ENCODE measurements at regions of chr7 and their contacts with region 1.

Region 1: DNA sequence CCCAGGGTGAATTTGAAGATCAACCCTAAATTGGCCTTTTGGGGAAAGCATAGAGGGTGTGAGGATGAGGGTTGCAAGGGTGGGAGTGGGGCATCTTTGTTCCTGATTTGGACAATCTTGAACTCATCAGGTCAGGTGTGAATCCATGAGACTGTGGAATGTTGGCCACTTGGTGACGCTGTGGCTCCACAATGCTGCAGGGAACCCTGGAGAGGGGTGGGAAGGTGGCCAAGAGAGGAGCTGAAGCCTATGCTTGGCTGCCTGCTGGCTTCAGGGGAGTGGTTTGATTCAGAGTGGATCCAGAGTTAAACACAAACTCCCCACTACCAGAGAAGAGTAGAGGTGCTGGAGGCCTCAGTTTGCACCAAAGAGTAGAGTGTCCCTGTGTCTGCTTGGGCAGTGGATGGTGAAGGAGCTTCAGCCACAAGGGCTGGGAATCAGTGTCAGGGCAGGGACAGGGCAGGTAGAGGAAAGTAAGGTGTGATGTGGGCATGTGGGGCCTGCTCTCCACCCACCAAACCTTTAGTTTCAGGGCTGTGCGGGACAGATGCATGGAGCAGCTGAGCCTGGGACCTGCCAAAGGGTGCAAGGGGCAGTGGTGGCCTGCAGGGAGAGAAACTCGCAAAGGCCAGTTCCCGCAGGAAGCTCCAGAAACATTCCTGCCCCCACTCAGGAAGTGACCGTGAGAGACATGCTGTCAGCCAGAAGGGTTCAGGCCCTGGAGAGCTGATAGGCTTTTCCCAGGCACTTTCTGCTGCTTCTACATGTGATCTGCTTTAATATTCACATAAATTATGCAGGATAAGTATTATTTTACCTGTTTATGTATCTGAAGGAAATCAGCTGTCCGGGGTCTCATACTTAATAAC is 81.0 kb upstream of the PRSS58 start:
- DNase-seq: no peak
- ATAC-seq: no peak
- H3K4me3 ChIP-seq: no peak overlapping the region
- H3K4me3 Mint-ChIP-seq: peak overlapping the region in 5 of 10 donors; percentile 13 to 52 (median 17)
- H3K27ac ChIP-seq: no peak overlapping the region
- H3K27ac Mint-ChIP-seq: peak overlapping the region in 4 of 9 donors; percentile 35 to 78 (median 57)
- H3K4me1 ChIP-seq: no peaks in the 10 kb centered on the region
- H3K4me1 Mint-ChIP-seq: peaks cover 1 to 24% (median 8%) of the 10 kb centered on the region in 7 donors
- H3K27me3 ChIP-seq: no peaks in the 10 kb centered on the region
- H3K27me3 Mint-ChIP-seq: peaks cover 0 to 21% (median 10%) of the 10 kb centered on the region in 5 donors

Region 2: GRCh38 chr7:141511676-141512396 is 827.0 kb before region 1 on chr7:
- CTCF ChIA-PET with region 1: no interaction called
- POLR2A ChIA-PET with region 1: no interaction called
- intact Hi-C with region 1: no loop called
- DNase-seq: no peak
- ATAC-seq: no peak
- H3K4me3 ChIP-seq: peak overlapping the region; percentile 16
- H3K4me3 Mint-ChIP-seq: peak overlapping the region; percentile 61 to 79 (median 72)
- H3K27ac ChIP-seq: no peak overlapping the region
- H3K27ac Mint-ChIP-seq: no peak overlapping the region
- H3K4me1 ChIP-seq: no peaks in the 10 kb centered on the region
- H3K4me1 Mint-ChIP-seq: peaks cover 8 to 16% (median 13%) of the 10 kb centered on the region in 7 donors
- H3K27me3 ChIP-seq: no peaks in the 10 kb centered on the region
- H3K27me3 Mint-ChIP-seq: peaks cover 63 to 76% (median 72%) of the 10 kb centered on the region in 5 donors

Region 3: DNA sequence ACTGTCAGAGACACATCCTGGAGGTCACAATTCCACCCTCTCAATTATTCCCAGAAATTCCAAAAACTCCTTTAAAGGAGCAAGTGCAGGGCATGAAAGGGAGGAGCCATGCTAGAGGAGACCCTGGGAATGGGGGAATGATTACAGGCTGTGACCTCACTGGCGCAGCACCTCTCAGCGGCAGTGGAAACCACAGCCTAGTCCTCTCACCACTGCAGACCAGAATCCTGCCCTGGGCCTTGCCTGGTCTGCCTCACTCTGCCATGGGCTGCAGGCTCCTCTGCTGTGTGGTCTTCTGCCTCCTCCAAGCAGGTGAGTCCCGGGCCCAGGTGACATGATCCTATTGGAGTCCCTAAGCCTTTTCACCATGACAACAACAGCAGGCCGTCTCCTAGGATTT is 30.5 kb before region 1 on chr7:
- CTCF ChIA-PET with region 1: interaction called, 6 read pairs
- POLR2A ChIA-PET with region 1: no interaction called
- intact Hi-C with region 1: loop called in 1 of 2 experiments (anchors 1 kb)
- DNase-seq: no peak
- ATAC-seq: peak; percentile 34
- H3K4me3 ChIP-seq: no peak overlapping the region
- H3K4me3 Mint-ChIP-seq: peak overlapping the region in 6 of 10 donors; percentile 15 to 76 (median 48)
- H3K27ac ChIP-seq: no peak overlapping the region
- H3K27ac Mint-ChIP-seq: no peak overlapping the region
- H3K4me1 ChIP-seq: peaks cover 9 to 12% of the 10 kb centered on the region in 2 donors
- H3K4me1 Mint-ChIP-seq: peaks cover 5 to 30% (median 25%) of the 10 kb centered on the region in 7 donors
- H3K27me3 ChIP-seq: no peaks in the 10 kb centered on the region
- H3K27me3 Mint-ChIP-seq: peaks cover 0 to 30% (median 13%) of the 10 kb centered on the region in 5 donors

Region 4: GRCh38 chr7:142459551-142459963 is 120.7 kb after region 1 on chr7:
- CTCF ChIA-PET with region 1: no interaction called
- POLR2A ChIA-PET with region 1: no interaction called
- intact Hi-C with region 1: no loop called
- DNase-seq: peak in 5 of 9 donors; percentile 19 to 42 (median 34)
- ATAC-seq: peak; percentile 72
- H3K4me3 ChIP-seq: no peak overlapping the region
- H3K4me3 Mint-ChIP-seq: peak overlapping the region; percentile 12 to 83 (median 47)
- H3K27ac ChIP-seq: peak overlapping the region; percentile 46
- H3K27ac Mint-ChIP-seq: peak overlapping the region; percentile 24 to 92 (median 67)
- H3K4me1 ChIP-seq: peaks cover 4 to 42% of the 10 kb centered on the region in 2 donors
- H3K4me1 Mint-ChIP-seq: peaks cover 38 to 86% (median 81%) of the 10 kb centered on the region in 7 donors
- H3K27me3 ChIP-seq: no peaks in the 10 kb centered on the region
- H3K27me3 Mint-ChIP-seq: peaks cover 0 to 7% (median 0%) of the 10 kb centered on the region in 5 donors

Measured in naive thymus-derived CD4-positive, alpha-beta T cell (primary cell).